GM13977 (cell line): ENCODE measurements at regions of chr10 and their contacts with region 1.

Region 1: GRCh38 chr10:35103882-35104281 is 13.7 kb upstream of the CUL2 start:
- DNase-seq: no peak
- CTCF ChIP-seq: no peak

Region 2: GRCh38 chr10:35613597-35614226 is 509.8 kb after region 1 on chr10:
- in situ Hi-C with region 1: loop called (anchors 25 kb)
- DNase-seq: no peak
- CTCF ChIP-seq: peak; percentile 10